CD4-positive, alpha-beta T cell (primary cell): ENCODE measurements at regions of chr6 and their contacts with region 1.

Region 1: GRCh38 chr6:128725271-128726233 is 157.4 kb upstream of the LAMA2 start:
- DNase-seq: peak in 5 of 14 experiments; percentile 1 to 33 (median 26)
- ATAC-seq: no peak
- H3K4me3 ChIP-seq: no peak overlapping the region
- H3K4me3 Mint-ChIP-seq: no peak overlapping the region
- H3K27ac ChIP-seq: no peak overlapping the region
- H3K27ac Mint-ChIP-seq: no peak overlapping the region
- H3K4me1 ChIP-seq: no peaks in the 10 kb centered on the region
- H3K4me1 Mint-ChIP-seq: no peaks in the 10 kb centered on the region
- H3K27me3 ChIP-seq: peaks cover 0 to 11% of the 10 kb centered on the region in 2 experiments
- H3K27me3 Mint-ChIP-seq: peaks cover 37% of the 10 kb centered on the region
- CTCF ChIP-seq: peak; percentile 63

Region 2: DNA sequence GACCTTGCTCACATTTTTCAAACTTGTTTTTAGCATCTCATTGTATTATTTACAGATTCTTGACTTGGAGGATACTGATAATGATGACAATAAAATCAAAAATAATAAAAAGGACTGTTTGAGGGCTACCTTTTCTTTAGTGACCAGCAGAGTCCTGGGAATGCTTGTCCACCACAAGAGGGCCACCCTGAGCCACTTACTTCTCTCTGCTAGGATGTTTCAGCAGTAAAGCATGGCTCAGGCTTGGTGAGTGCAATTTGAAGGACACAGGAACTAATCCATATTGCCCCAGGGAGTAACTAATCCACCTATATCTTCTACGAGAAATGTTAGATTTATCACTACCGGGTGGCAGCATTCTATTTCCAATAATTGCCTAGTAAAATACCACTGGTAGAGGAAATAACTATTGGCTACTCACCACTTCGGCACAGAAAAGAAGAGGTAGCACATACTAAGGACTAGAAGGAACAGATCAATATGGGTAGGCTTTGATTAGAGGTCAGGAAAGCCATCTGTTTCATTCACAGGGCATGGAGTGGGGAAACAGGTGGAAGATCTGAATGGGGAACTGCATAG is 1260.6 kb before region 1 on chr6:
- CTCF ChIA-PET with region 1: no interaction called
- POLR2A ChIA-PET with region 1: no interaction called
- intact Hi-C with region 1: loop called in 1 of 2 experiments (anchors 10 kb)
- DNase-seq: peak; percentile 29 to 74 (median 52)
- ATAC-seq: no peak
- H3K4me3 ChIP-seq: no peak overlapping the region
- H3K4me3 Mint-ChIP-seq: no peak overlapping the region
- H3K27ac ChIP-seq: no peak overlapping the region
- H3K27ac Mint-ChIP-seq: no peak overlapping the region
- H3K4me1 ChIP-seq: no peaks in the 10 kb centered on the region
- H3K4me1 Mint-ChIP-seq: no peaks in the 10 kb centered on the region
- H3K27me3 ChIP-seq: no peaks in the 10 kb centered on the region
- H3K27me3 Mint-ChIP-seq: no peaks in the 10 kb centered on the region
- CTCF ChIP-seq: peak; percentile 78

Region 3: GRCh38 chr6:128663238-128663637 is 62.3 kb before region 1 on chr6:
- CTCF ChIA-PET with region 1: no interaction called
- POLR2A ChIA-PET with region 1: no interaction called
- intact Hi-C with region 1: no loop called
- DNase-seq: no peak
- ATAC-seq: no peak
- H3K4me3 ChIP-seq: no peak overlapping the region
- H3K4me3 Mint-ChIP-seq: no peak overlapping the region
- H3K27ac ChIP-seq: no peak overlapping the region
- H3K27ac Mint-ChIP-seq: no peak overlapping the region
- H3K4me1 ChIP-seq: no peaks in the 10 kb centered on the region
- H3K4me1 Mint-ChIP-seq: no peaks in the 10 kb centered on the region
- H3K27me3 ChIP-seq: no peaks in the 10 kb centered on the region
- H3K27me3 Mint-ChIP-seq: peaks cover 7% of the 10 kb centered on the region
- CTCF ChIP-seq: no peak

Region 4: GRCh38 chr6:129370268-129370916 is 644.8 kb after region 1 on chr6:
- CTCF ChIA-PET with region 1: no interaction called
- POLR2A ChIA-PET with region 1: no interaction called
- intact Hi-C with region 1: loop called (anchors 2 to 5 kb)
- DNase-seq: peak; percentile 4 to 62 (median 24)
- ATAC-seq: no peak
- H3K4me3 ChIP-seq: no peak overlapping the region
- H3K4me3 Mint-ChIP-seq: peak overlapping the region; percentile 45
- H3K27ac ChIP-seq: no peak overlapping the region
- H3K27ac Mint-ChIP-seq: no peak overlapping the region
- H3K4me1 ChIP-seq: no peaks in the 10 kb centered on the region
- H3K4me1 Mint-ChIP-seq: peaks cover 13% of the 10 kb centered on the region
- H3K27me3 ChIP-seq: no peaks in the 10 kb centered on the region
- H3K27me3 Mint-ChIP-seq: no peaks in the 10 kb centered on the region
- CTCF ChIP-seq: peak; percentile 83

Region 5: GRCh38 chr6:129575378-129576118 is 850.0 kb after region 1 on chr6:
- CTCF ChIA-PET with region 1: no interaction called
- POLR2A ChIA-PET with region 1: no interaction called
- intact Hi-C with region 1: loop called (anchors 5 kb)
- DNase-seq: peak in 4 of 14 experiments; percentile 5 to 54 (median 45)
- ATAC-seq: peak; percentile 49
- H3K4me3 ChIP-seq: peak overlapping the region; percentile 22
- H3K4me3 Mint-ChIP-seq: peak overlapping the region; percentile 34
- H3K27ac ChIP-seq: no peak overlapping the region
- H3K27ac Mint-ChIP-seq: no peak overlapping the region
- H3K4me1 ChIP-seq: no peaks in the 10 kb centered on the region
- H3K4me1 Mint-ChIP-seq: no peaks in the 10 kb centered on the region
- H3K27me3 ChIP-seq: no peaks in the 10 kb centered on the region
- H3K27me3 Mint-ChIP-seq: no peaks in the 10 kb centered on the region
- CTCF ChIP-seq: peak; percentile 84

Region 6: GRCh38 chr6:129976110-129976509 is 1250.6 kb after region 1 on chr6:
- CTCF ChIA-PET with region 1: no interaction called
- POLR2A ChIA-PET with region 1: no interaction called
- intact Hi-C with region 1: loop called in 1 of 2 experiments (anchors 10 kb)
- DNase-seq: no peak
- ATAC-seq: no peak
- H3K4me3 ChIP-seq: no peak overlapping the region
- H3K4me3 Mint-ChIP-seq: no peak overlapping the region
- H3K27ac ChIP-seq: no peak overlapping the region
- H3K27ac Mint-ChIP-seq: no peak overlapping the region
- H3K4me1 ChIP-seq: no peaks in the 10 kb centered on the region
- H3K4me1 Mint-ChIP-seq: no peaks in the 10 kb centered on the region
- H3K27me3 ChIP-seq: no peaks in the 10 kb centered on the region
- H3K27me3 Mint-ChIP-seq: peaks cover under 1% of the 10 kb centered on the region
- CTCF ChIP-seq: no peak